ENCODE measurements at regions of chr5 and their contacts with region 1.

Region 1: GRCh38 chr5:114153833-114154232 is 208.0 kb upstream of the KCNN2 start:
- DNase-seq: no peak
- H3K4me3 ChIP-seq: no peak overlapping the region
- H3K27ac ChIP-seq: no peak overlapping the region
- H3K4me1 ChIP-seq: no peaks in the 10 kb centered on the region
- H3K27me3 ChIP-seq: no peaks in the 10 kb centered on the region
- CTCF ChIP-seq: no peak
- EP300 ChIP-seq: no peak
- POLR2A ChIP-seq: no peak

Region 2: GRCh38 chr5:113900807-113901206 is 253.0 kb before region 1 on chr5:
- in situ Hi-C with region 1: no loop called
- intact Hi-C with region 1: no loop called
- DNase-seq: no peak
- H3K4me3 ChIP-seq: no peak overlapping the region
- H3K27ac ChIP-seq: no peak overlapping the region
- H3K4me1 ChIP-seq: no peaks in the 10 kb centered on the region
- H3K27me3 ChIP-seq: no peaks in the 10 kb centered on the region
- CTCF ChIP-seq: no peak
- EP300 ChIP-seq: no peak
- POLR2A ChIP-seq: no peak

Region 3: DNA sequence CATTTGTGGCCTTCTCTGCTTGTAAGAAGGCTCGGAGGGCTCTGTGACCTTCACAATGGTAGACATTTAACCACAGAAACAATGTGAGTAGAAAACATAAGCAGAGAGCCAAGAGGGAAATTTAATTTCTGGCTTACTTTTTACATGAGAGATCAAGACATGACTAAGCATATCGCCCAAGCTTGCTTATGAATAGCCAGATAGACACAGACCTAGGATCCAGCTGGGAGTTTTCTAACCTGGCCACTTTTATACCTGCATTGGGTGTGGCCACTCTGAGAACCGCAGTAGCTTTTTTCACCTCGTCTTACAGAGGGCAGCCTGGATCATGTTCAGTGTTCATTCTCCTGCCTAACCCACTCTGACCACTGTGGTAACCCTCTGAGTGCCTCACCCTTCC is 36.9 kb before region 1 on chr5:
- in situ Hi-C with region 1: no loop called
- intact Hi-C with region 1: loop called (anchors 1 kb)
- DNase-seq: no peak
- H3K4me3 ChIP-seq: no peak overlapping the region
- H3K27ac ChIP-seq: no peak overlapping the region
- H3K4me1 ChIP-seq: no peaks in the 10 kb centered on the region
- H3K27me3 ChIP-seq: no peaks in the 10 kb centered on the region
- CTCF ChIP-seq: no peak
- EP300 ChIP-seq: no peak
- POLR2A ChIP-seq: no peak